ENCODE measurements at regions of chr6 and their contacts with region 1.

Region 1: DNA sequence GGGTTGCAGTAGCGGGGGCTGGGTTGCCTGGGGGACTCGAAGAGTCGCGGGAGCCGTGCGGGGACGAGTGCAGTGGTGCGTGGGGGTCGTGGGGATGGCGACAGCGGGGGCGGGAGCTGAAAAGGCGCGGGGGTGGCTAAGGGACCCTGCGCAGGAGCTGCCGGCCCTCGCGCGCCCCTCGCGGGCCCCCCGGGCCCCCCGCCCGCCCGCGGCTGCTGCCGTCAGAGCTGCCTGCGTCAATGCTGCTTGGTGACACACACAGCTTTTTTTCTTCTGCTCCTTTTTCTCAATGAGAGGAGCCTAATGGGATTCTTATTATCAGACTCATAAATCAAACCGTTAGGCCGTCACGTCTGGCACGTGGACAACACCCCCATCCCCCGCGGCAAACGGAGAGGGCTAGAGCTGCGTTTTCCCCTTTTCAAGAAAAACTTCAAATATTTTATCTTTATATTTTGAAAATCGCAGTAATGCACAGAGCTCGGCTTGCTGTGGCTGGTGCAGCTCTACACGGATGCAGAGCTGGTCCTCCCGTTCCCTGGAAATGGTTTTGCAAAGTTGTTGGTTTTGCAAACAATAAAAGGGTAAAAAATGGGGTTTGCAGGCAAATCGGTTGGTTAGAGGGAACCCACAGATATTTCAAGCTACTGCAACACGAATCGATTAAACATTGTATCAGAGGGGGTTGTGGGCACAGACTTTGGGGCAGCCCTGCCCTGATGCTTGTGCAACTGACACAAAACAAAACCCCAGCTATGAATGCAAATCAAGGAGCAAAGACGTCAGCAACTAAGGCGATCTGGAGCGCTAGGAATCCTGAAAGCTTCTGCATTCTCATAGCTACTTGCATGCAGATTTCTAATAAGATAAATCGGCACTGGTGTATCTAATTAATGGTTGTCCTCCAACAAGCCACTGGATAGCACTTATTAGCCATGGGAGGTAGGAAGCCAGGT is 161.4 kb downstream of the TBXT start:
- DNase-seq: no peak
- H3K4me3 Mint-ChIP-seq: no peak overlapping the region
- H3K27ac Mint-ChIP-seq: no peak overlapping the region
- H3K4me1 Mint-ChIP-seq: no peaks in the 10 kb centered on the region
- H3K27me3 Mint-ChIP-seq: peaks cover 65% of the 10 kb centered on the region

Region 2: GRCh38 chr6:165662749-165663282 is 343.4 kb before region 1 on chr6 and contains the start of gene PDE10A:
- intact Hi-C with region 1: loop called (anchors 5 kb)
- DNase-seq: no peak
- H3K4me3 Mint-ChIP-seq: no peak within 1 kb of the TSS
- H3K27ac Mint-ChIP-seq: no peak within 1 kb of the TSS
- H3K4me1 Mint-ChIP-seq: peaks cover 5% of the 10 kb centered on the region
- H3K27me3 Mint-ChIP-seq: peaks cover 59% of the 10 kb centered on the region
- total RNA-seq, gene PDE10A: 0.05 TPM in 1 of 2 replicates, not detected in the other

Region 3: DNA sequence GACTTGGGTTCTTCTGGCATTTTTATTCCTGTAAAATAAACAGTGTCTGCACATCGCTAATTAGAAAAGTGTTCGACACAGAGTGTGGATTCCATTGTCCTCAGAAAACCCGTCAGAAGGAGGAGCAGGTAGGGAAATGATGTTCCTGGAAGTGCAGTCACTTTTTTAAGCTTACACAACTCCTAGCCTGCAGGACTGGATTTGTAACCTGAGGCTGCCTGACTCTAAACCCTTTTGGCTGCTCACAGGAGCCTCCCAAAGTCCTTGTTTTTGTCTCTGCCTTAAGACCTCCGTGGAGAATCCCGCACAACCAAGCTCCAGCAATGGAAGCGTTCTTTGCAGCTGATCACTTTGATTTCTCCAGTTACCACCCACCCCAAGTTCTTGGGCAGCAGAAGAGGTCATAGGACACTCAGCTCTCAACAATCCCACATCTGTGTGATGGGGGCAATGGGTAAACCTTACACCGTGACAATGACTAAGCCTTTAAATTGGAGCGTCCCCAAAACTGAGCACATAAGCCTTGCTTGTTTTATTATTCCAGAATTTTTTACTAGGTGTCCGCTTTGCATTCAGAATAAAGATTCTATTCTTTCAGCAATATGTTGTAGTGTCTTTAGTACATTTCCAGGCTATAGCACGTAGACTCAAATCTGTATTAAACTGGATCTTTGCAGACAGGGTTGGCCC is 66.5 kb before region 1 on chr6:
- intact Hi-C with region 1: no loop called
- DNase-seq: no peak
- H3K4me3 Mint-ChIP-seq: no peak overlapping the region
- H3K27ac Mint-ChIP-seq: no peak overlapping the region
- H3K4me1 Mint-ChIP-seq: no peaks in the 10 kb centered on the region
- H3K27me3 Mint-ChIP-seq: no peaks in the 10 kb centered on the region

Region 4: DNA sequence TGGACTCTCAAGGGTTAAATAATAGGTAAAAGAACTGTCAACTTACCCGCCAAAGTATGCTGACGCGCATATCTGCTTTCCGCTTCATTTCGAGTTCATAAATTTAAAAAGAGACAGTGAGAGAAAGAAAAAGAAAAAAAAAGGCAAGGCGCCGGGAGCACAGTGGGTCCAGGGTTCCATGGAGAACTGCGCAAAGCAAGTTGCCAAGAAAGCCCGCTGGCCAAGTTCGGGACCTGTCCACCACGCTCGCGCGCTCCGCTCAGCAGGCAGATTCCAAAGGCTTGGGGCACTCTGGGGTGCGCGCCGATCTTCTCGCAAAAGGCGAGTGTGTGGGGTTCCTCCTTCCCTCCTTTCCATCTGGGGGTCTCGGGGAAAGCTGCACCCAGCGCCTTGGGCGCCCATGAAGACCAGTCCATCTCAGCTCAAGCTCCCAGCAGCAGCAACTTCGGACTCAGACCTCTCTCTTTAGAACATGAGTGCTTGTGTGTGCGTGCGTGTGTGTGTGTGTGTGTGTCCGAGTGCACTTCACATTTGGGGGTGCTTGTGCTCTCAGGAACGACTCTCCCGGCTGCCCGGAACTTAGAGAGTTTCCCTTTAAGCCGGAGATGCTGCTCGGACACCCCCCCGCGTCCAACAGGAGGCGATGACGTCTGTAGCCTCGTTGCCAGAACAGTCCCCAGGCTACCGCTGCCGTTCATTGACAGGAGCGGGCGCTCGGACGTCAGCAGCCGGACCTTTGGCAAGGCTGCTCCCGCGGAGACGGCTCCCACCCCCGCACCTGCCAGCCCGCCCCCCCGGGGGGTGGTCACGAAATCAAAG is 18.5 kb before region 1 on chr6:
- intact Hi-C with region 1: loop called (anchors 2 kb)
- DNase-seq: no peak
- H3K4me3 Mint-ChIP-seq: no peak overlapping the region
- H3K27ac Mint-ChIP-seq: no peak overlapping the region
- H3K4me1 Mint-ChIP-seq: no peaks in the 10 kb centered on the region
- H3K27me3 Mint-ChIP-seq: peaks cover 46% of the 10 kb centered on the region

Region 5: DNA sequence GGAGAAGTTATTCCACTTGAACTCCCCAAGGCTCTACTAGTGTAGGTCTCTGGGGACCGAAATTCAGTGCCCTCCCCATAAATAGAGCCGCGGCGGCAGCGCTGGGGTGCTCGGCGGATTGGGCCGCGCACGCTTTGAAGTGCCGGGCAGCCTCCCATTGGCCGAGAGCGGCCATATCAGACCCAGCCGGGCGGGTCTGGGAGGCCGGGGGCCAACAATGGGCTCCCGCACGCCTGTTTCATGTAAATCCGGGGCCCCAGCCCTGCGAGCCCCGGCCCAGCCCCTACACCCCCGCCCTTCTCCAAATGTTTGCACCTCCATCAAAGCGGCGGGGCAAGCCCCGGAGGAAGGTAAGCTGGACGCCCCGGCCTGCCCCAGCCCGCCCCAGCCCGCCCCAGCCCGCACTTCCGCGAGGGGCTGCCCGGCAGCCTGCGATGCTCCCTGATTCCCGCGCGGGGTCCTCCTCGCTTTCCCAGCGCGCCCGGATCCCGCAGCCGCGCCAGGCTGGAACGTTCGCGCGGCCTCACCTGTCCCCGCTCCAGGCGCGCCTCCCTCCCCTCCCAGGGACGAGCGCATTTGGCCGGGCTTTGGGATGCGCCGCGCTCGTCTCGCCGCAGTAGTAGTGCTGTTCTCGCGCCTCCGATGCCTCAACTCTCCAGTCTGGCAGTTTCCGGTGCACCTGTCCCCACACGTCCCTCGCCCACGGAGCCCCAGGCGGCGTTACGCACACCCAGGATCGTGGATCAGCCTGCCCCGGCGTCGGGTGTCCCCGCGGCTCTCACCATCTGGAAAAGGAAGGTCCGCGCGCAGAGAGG is 161.8 kb after region 1 on chr6 and contains the start of gene TBXT:
- intact Hi-C with region 1: loop called (anchors 2 kb)
- DNase-seq: no peak
- H3K4me3 Mint-ChIP-seq: peak within 1 kb of the TSS; percentile 38
- H3K27ac Mint-ChIP-seq: no peak within 1 kb of the TSS
- H3K4me1 Mint-ChIP-seq: peaks cover 5% of the 10 kb centered on the region
- H3K27me3 Mint-ChIP-seq: peaks cover 59% of the 10 kb centered on the region
- total RNA-seq, gene TBXT: not detected in 2 replicates

Measured in activated T-helper 2 cell treated with anti-CD3 and anti-CD28 coated beads, Interferon-gamma antibody, Interleukin-2, Interleukin-4, amounts not matched to agents 10 μg/mL and 5 μg/mL and 100 μg/mL, durations not matched to agents 14 hours and 24 hours and 36 hours (primary cell).